ENCODE measurements at regions of chrX and their contacts with region 1.

Region 1: DNA sequence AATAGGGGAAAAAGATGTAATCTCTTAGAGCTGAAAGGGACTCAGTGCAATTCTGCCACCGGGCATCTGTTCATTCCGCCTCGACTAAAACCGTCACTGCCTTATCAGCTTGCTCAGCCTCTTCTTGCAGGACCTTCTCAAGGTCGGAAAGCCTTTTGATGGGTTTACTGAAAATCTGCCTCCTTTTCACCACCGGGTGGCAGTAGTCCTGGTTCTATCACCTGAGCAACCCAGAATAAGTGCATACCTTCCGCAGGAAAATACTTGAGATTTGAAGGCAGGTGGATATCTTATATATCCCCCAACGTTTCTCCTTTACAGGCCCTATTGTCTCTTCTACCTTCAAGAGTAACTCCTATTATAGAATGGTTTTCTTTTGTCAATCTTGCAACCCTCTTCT is 103.4 kb upstream of the PAK3 start:
- DNase-seq: peak in 5 of 7 donors; percentile 17 to 55 (median 23)
- H3K4me3 ChIP-seq: no peak overlapping the region
- H3K27ac ChIP-seq: no peak overlapping the region
- H3K4me1 ChIP-seq: no peaks in the 10 kb centered on the region
- H3K27me3 ChIP-seq: peaks cover 5% of the 10 kb centered on the region
- CTCF ChIP-seq: peak in 4 of 6 experiments; percentile 17 to 39 (median 36)
- POLR2A ChIP-seq: no peak

Region 2: DNA sequence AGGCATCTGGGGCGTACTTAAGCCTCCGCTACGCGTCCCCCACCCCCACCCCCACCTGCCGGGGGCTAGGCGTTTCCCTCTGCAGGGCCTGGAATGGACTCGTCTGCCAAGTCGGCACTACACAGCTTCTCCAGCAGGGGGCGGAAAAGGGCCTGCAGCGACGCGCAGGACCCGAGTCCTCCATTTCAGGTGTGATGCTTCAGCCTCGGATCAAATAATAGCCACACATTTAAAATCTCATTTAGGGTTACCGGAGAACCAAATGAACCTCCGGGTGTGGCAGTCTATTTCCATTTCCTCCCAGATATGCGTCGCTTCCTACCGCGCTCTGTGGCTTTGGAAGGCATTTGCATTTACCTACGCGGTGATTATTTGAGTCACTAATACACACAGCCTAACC is 106.3 kb after region 1 on chrX:
- intact Hi-C with region 1: loop called in 1 of 2 experiments (anchors 10 kb)
- DNase-seq: peak in 6 of 7 donors; percentile 21 to 71 (median 38)
- H3K4me3 ChIP-seq: no peak overlapping the region
- H3K27ac ChIP-seq: no peak overlapping the region
- H3K4me1 ChIP-seq: no peaks in the 10 kb centered on the region
- H3K27me3 ChIP-seq: peaks cover 33% of the 10 kb centered on the region
- CTCF ChIP-seq: peak; percentile 20 to 63 (median 54)
- POLR2A ChIP-seq: no peak

Measured in adrenal gland (tissue), 19 donors.